ENCODE measurements at regions of chr3 and their contacts with region 1.

Region 1: DNA sequence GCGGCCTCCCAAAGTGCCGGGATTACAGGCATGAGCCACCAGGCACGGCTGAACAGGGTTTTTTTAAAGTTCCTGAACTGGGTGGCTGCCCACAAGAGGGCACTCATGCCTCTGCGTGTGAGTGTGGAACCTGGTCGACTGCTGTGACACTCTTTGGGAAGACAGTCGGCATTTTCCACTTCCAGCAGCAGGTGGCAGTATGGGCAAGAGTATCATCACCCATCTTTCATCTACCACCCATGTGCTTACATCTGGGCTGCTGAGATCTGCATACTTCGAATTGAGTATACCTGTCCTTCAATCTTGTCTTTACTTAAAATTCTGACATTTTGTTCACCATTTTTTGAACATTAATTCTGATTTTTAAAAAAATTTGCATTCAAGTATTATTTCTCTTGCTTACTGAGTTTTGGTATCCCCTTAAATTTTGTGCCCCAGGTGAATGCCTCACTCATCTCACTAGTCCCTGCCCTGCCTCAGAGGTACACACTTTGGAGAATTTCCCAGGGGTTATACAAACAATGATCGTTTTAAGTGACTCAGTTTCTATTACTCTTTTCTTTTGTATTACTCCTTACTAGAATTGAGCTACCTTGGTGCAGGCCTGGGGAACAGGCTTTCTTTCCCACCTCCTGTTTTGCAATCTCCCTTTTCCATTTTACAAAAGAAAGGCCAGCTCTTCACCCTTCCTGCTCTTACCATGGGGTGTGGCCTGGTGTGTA is 11.8 kb downstream of the CLEC3B start:
- DNase-seq: peak; percentile 96 to 98
- H3K4me3 ChIP-seq: no peak overlapping the region
- CTCF ChIP-seq: peak in 1 of 3 donors; percentile 93
- POLR2A ChIP-seq: no peak

Region 2: DNA sequence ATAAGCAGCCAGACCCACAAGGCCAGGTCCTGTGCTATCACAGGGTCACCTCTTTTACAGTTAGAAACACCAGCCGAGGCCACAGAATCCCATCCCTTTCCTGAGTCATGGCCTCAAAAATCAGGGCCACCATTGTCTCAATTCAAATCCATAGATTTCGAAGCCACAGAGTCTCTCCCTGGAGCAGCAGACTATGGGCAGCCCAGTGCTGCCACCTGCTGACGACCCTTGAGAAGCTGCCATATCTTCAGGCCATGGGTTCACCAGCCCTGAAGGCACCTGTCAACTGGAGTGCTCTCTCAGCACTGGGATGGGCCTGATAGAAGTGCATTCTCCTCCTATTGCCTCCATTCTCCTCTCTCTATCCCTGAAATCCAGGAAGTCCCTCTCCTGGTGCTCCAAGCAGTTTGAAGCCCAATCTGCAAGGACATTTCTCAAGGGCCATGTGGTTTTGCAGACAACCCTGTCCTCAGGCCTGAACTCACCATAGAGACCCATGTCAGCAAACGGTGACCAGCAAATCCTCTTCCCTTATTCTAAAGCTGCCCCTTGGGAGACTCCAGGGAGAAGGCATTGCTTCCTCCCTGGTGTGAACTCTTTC is 123.9 kb before region 1 on chr3:
- intact Hi-C with region 1: loop called (anchors 10 kb)
- DNase-seq: peak in 1 of 2 donors; percentile 27
- H3K4me3 ChIP-seq: no peak overlapping the region
- CTCF ChIP-seq: no peak
- POLR2A ChIP-seq: no peak

Region 3: GRCh38 chr3:45210308-45211041 is 172.6 kb after region 1 on chr3:
- intact Hi-C with region 1: loop called (anchors 5 kb)
- DNase-seq: peak; percentile 84 to 96
- H3K4me3 ChIP-seq: no peak overlapping the region
- CTCF ChIP-seq: peak in 1 of 3 donors; percentile 63
- POLR2A ChIP-seq: no peak

Region 4: GRCh38 chr3:45499529-45499928 is 461.6 kb after region 1 on chr3:
- intact Hi-C with region 1: loop called (anchors 5 kb)
- DNase-seq: no peak
- H3K4me3 ChIP-seq: no peak overlapping the region
- CTCF ChIP-seq: no peak
- POLR2A ChIP-seq: no peak